Dorsolateral prefrontal cortex (tissue), 120 donors: ENCODE measurements at regions of chr16 and their contacts with region 1.

Region 1: DNA sequence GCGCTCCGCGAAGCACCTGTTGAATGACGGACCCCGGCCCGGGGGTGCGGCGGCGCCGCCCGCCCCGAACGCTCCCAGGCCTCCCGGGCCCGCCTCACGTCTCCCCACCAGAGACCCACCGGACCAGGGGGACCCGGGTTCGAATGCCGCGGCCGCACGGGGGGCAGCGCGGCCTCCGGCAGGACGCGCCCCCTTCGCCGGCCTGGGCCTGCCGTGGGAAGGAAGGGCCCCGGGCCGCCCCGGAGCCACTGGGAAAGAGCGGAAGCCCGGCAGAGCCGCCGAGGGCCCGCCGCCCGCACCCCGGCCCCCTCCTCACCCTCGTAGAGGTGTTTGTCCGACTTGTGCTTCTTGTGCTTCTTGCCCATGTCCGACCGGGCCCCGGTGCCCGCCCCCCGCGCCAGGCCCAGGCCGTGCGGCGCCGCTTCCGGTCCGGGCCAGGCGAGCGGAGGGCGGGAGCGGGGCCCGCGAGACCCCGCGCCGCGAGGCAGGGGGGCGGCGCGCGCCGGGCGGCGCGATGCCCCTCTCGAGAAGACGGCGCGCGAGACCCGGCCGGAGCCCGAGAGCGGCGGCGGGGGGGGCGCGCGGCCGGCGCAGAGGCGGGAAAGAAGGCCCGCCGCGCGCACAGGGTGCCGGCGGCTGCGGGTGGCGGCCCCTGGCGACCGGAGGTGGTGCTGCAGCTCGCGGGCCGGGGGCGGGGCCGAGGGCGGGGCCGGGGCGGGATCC is at the start of gene BRD7:
- DNase-seq: peak in 6 of 10 donors; percentile 45 to 80 (median 57)
- H3K4me3 ChIP-seq: peak within 1 kb of the TSS; percentile 64 to 98 (median 90)
- H3K27ac ChIP-seq: peak within 1 kb of the TSS in 27 of 59 donors; percentile 1 to 85 (median 45)
- H3K27me3 ChIP-seq: no peaks in the 10 kb centered on the region
- CTCF ChIP-seq: peak in 35 of 56 donors; percentile 11 to 74 (median 53)
- total RNA-seq, gene BRD7: 39.0 to 87.8 (median 53.4) TPM

Region 2: DNA sequence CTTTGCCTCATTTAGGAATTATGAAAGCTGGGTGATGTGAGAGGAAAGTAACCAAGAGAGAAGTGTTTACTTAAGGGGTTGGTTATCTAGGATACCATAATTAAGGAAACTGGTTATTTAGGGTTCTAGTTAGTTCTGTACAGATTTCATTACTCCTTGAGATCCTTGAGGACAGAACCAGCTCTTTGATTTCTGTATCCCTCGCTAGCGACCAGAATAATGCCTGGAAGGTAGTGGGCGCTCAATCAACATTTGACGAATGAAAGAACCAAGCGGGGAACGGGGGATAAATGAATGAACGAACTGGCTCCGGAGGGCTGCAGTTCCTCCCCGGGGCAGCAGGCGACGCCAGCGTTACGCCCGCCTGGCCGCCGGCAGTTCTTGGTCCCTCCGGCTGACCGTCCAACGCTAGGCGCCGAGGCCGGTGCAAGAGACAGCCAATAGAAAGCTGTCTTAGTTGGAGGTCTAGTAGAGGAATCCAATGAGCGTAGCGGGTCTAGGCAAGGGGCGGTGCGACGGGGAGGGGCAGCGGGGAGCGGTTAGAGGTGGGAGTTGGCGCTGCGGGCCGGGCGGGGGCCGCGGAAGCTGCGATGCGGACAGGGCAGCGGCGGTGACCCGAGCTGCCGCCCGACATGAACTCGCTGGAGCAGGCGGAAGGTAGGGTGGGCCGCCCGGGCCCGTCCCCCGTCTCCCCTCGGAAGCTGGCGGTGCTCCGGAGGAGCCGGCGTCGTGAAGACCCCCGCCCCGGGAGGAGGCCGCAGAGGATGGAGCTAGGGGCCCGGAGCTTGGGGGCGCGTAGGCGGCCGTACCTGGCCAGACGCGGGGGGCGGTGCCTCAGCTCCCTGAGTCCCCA is 343.7 kb before region 1 on chr16 and contains the start of gene CNEP1R1:
- intact Hi-C with region 1: loop called (anchors 5 to 10 kb)
- DNase-seq: peak; percentile 87 to 95 (median 94)
- H3K4me3 ChIP-seq: peak within 1 kb of the TSS; percentile 71 to 100 (median 99)
- H3K27ac ChIP-seq: peak within 1 kb of the TSS in 55 of 59 donors; percentile 27 to 93 (median 81)
- H3K27me3 ChIP-seq: no peaks in the 10 kb centered on the region
- CTCF ChIP-seq: peak; percentile 97 to 100 (median 100)
- total RNA-seq, gene CNEP1R1: 16.8 to 35.7 (median 24.8) TPM

Region 3: DNA sequence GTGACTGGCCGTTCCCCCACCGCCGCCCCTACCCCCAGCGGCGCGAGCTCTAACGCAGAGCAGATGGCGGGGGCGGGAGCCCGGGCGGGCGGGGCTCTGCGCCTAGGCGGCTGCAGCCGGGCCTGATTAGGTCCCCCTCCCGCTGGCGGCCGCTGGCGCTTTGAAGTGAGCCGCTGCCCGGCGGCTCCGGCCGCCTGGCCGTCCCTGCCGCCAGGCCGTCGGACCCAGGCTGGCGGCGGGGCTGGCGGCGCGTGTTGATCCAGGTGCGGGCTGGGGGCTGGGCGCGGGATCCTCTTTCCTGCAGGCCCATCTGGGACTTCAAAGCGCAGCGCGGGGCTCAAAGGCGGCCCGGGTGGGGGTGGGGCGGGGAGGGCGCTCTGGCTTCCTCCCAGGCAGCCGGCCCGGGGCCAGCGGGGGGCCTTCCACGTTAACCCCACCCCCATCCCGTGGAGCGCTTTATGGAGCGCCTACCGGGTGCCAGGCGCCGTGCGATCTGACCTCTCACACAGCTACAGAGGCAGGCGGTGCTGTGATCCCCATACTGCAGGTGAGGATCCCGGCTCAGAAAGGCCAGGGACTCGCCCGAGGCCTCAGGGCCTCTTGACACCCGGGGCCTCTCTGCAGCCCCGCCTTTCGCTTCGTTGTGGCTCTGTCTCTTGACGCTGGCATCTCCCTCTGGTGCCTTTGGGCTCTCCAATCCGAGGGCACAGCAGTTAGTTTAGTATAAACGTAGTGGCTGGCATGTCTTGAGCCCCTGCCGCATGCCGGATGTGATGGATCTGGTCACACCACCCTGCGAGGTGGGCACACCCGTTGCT is 99.6 kb after region 1 on chr16:
- intact Hi-C with region 1: loop called (anchors 5 kb)
- DNase-seq: peak in 5 of 10 donors; percentile 23 to 53 (median 44)
- H3K4me3 ChIP-seq: peak overlapping the region; percentile 15 to 66 (median 51)
- H3K27ac ChIP-seq: peak overlapping the region in 18 of 59 donors; percentile 5 to 76 (median 50)
- H3K27me3 ChIP-seq: peaks cover 0 to 22% (median 0%) of the 10 kb centered on the region in 45 donors
- CTCF ChIP-seq: peak in 3 of 56 donors; percentile 13 to 24 (median 17)

Region 4: DNA sequence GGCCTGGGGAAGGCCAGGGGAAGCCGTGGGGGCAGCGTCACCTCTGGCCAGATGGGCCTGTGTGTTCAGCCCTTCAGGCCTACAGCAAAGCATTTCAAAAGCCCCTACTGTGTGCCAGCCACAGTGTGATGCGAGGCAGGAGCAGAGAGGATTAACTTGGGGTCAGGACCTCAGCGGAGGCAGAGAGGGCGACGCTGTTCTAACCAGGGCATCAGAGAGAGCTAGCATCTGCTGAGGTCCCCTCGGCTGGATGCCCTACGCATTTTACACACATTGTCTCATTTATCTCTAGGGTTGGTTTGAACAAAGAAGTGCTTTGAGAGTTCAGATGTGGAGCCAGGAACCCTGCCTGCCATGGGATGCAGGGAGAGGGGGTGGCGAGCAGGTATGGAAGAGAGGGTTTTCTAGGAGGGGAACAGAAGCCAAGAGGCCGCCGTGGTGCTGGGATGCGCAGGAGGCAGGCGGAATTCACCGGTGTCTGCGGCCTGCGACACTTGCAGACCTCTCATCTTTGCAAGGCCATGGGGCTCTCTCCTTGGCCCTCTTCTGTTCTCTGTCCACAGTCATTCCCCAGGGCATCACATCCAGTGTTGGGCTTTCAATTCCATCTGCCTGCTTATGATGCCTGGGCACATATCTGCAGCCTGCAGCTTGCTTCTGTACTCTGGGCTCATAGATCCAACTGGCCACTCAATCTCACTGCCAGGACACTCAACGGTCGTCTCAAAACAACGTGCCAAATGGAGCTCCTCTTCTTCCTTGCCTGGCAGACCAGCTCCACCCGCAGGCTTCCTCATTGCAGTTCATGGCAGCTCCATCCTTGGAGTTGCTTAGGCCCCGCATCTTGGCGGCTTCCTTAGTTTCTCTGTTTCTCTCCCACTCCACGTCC is 171.5 kb after region 1 on chr16:
- intact Hi-C with region 1: loop called (anchors 2 to 5 kb)
- DNase-seq: peak in 7 of 10 donors; percentile 22 to 67 (median 60)
- H3K4me3 ChIP-seq: peak overlapping the region in 15 of 59 donors; percentile 7 to 46 (median 17)
- H3K27ac ChIP-seq: peak overlapping the region in 47 of 59 donors; percentile 3 to 80 (median 61)
- H3K27me3 ChIP-seq: peaks cover 0 to 7% (median 0%) of the 10 kb centered on the region in 45 donors
- CTCF ChIP-seq: peak in 49 of 56 donors; percentile 10 to 58 (median 36)

Region 5: DNA sequence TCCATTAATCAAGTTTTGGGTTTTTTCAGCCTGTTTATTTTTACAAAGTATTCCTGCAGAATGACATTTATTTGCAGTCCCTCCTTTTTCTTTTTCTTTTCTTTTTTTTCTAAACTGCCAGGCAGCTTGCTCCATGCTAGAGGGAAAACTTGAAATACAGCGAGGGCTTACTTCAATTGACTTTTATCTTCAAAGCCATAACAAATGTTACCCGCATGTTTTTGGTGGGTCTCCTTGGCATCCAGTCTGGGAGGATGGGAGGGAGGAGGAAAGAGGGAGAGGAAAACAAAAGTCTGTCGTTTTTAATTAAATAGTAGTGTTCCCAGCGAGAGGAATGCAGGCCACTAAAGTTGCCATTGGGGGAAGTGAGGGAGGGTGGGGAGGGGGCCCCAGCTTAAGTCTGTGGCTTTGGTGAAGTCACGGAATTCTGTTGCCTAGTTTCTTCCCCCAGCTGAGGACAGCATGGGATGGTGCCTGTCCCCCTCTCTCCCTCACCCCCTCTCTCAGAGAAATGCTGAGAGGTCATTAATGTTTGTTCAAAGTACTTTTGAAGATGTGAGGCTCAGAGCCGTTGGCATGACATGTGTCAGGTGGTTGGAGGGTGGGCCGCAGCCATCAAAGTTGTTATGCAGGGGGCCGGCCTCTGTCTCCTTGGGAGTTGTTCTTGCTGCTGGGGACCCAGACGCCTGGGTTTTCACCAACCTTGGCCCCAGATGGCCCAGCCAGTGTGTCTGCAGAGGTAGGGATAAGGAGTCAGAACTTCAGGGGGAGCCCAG is 182.5 kb after region 1 on chr16:
- intact Hi-C with region 1: no loop called
- DNase-seq: no peak
- H3K4me3 ChIP-seq: peak overlapping the region in 20 of 59 donors; percentile 11 to 94 (median 78)
- H3K27ac ChIP-seq: peak overlapping the region in 9 of 59 donors; percentile 3 to 74 (median 18)
- H3K27me3 ChIP-seq: peaks cover 0 to 13% (median 0%) of the 10 kb centered on the region in 45 donors
- CTCF ChIP-seq: no peak

Region 6: DNA sequence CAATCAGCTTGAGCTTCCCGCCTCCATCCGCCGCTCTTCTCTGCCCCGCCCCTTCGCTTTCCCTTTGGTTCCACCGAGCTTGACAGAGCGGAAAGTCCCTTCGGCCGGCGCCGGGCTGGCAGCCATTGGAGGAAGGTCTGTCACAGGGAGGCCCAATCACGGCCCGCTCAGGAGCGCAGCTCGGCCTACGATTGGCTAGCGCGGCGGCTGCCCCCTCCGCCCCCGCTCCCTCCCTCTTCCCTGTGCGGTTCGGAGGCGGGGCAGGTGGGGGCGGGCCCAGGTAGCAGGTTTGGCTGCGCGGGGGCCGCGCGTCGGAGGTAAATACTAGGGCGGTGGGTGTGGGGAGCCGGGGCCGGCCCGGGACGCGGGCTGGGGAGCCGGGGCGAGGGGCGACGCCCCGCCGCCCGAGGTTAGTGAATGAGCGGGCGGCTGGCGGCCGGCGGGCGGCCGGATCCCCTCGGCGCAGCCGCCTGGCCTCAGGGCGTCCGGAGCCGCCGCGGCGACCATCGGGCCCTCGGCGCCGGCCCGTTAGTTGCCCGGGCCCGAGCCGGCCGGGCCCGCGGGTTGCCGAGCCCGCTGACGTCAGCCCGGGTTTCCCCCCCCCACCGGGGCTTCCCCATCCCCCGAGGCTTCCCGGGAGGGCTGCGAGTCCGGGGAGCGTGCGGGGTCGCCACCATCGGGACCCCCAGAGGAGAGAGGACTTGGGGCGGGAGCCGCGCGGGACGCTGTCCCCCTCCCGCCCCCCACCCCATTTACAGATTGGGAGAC is 373.4 kb after region 1 on chr16 and contains the start of gene CYLD:
- intact Hi-C with region 1: loop called in 1 of 2 experiments (anchors 5 kb)
- DNase-seq: peak; percentile 99 to 100 (median 100)
- H3K4me3 ChIP-seq: peak within 1 kb of the TSS; percentile 57 to 98 (median 86)
- H3K27ac ChIP-seq: peak within 1 kb of the TSS in 58 of 59 donors; percentile 30 to 97 (median 89)
- H3K27me3 ChIP-seq: no peaks in the 10 kb centered on the region
- CTCF ChIP-seq: peak in 14 of 56 donors; percentile 5 to 43 (median 21)
- total RNA-seq, gene CYLD: 58.7 to 116 (median 82.7) TPM

Region 7: DNA sequence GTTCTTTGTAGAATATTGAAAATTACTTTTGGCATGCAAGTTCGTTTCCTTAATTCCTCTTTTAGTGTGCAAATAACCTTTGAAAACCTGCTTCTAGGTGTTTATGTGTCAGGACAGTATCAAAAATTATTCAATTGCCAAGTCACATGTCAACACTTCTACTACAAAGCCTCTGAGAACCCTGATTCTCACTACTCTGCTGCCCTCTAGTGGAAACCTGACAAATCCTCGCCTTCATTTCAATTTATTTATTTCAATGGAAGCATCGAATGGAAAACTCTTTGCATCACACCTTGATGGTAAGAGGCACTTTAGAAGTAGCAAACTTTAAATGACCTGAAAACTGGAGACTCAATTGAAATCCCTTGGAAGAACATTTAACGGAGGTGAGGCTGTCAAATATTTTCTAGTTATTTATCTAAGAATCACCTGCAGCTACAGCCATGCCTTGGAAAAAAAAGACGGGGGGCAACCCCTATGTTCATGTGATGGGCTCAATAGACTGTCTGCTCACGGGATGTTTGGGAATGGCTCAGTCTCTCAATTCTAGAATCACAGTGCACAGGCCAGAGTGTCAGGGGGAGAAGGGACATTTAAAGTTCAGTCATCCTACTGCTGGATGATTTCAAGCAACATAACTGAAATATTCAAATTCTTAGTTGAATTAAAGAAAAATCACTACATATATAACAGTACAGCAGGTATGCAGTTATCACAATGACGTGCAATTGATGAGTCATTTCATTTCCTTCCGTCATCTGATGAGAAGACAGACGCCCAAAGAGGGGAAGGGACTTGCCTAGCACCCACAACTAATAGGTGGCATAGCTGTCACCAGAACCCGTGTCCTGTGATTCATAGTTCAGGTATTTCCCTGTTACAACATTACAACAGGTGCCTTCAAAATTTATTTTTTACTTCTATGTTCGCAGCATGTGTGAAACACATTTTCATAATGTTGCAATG is 1614.4 kb after region 1 on chr16:
- intact Hi-C with region 1: loop called in 1 of 2 experiments (anchors 10 kb)
- DNase-seq: peak in 4 of 10 donors; percentile 5 to 63 (median 34)
- H3K4me3 ChIP-seq: peak overlapping the region in 1 of 59 donors; percentile 1
- H3K27ac ChIP-seq: peak overlapping the region in 10 of 59 donors; percentile 2 to 67 (median 34)
- H3K27me3 ChIP-seq: peaks cover 0 to 6% (median 0%) of the 10 kb centered on the region in 45 donors
- CTCF ChIP-seq: peak; percentile 69 to 99 (median 89)